ENCODE measurements at regions of chr2 and their contacts with region 1.

Region 1: GRCh38 chr2:27409321-27410073 is at the start of gene PPM1G:
- DNase-seq: peak; percentile 97
- H3K4me3 ChIP-seq: peak within 1 kb of the TSS; percentile 57 to 98 (median 75)
- H3K27ac ChIP-seq: peak within 1 kb of the TSS; percentile 73 to 93 (median 82)
- H3K4me1 ChIP-seq: peaks cover 0 to 36% (median 22%) of the 10 kb centered on the region in 4 donors
- H3K27me3 ChIP-seq: no peaks in the 10 kb centered on the region
- CTCF ChIP-seq: no peak
- EP300 ChIP-seq: no peak
- POLR2A ChIP-seq: peak in 1 of 2 donors; percentile 37
- total RNA-seq, gene PPM1G: 40.8 to 48.3 (median 44.5) TPM

Region 2: GRCh38 chr2:27380626-27381545 is 28.6 kb before region 1 on chr2 and contains the start of gene ZNF513:
- intact Hi-C with region 1: loop called (anchors 2 kb)
- DNase-seq: peak; percentile 99
- H3K4me3 ChIP-seq: peak within 1 kb of the TSS; percentile 51 to 87 (median 72)
- H3K27ac ChIP-seq: peak within 1 kb of the TSS; percentile 84 to 90 (median 88)
- H3K4me1 ChIP-seq: peaks cover 0 to 23% (median 21%) of the 10 kb centered on the region in 4 donors
- H3K27me3 ChIP-seq: no peaks in the 10 kb centered on the region
- CTCF ChIP-seq: no peak
- EP300 ChIP-seq: peak in 1 of 4 donors; percentile 29
- POLR2A ChIP-seq: peak; percentile 20 to 22
- total RNA-seq, gene ZNF513: 5.0 to 8.7 (median 7.2) TPM

Region 3: GRCh38 chr2:27428213-27428977 is 18.9 kb after region 1 on chr2 and contains the start of gene NRBP1:
- intact Hi-C with region 1: loop called (anchors 1 kb)
- DNase-seq: peak; percentile 95
- H3K4me3 ChIP-seq: peak within 1 kb of the TSS; percentile 89 to 99 (median 96)
- H3K27ac ChIP-seq: peak within 1 kb of the TSS; percentile 97 to 100 (median 98)
- H3K4me1 ChIP-seq: peaks cover 0 to 48% (median 40%) of the 10 kb centered on the region in 4 donors
- H3K27me3 ChIP-seq: no peaks in the 10 kb centered on the region
- CTCF ChIP-seq: no peak
- EP300 ChIP-seq: no peak
- POLR2A ChIP-seq: peak; percentile 92 to 93
- total RNA-seq, gene NRBP1: 78.5 to 93.5 (median 86.4) TPM

Region 4: GRCh38 chr2:27559228-27559627 is 149.7 kb after region 1 on chr2:
- intact Hi-C with region 1: no loop called
- DNase-seq: no peak
- H3K4me3 ChIP-seq: no peak overlapping the region
- H3K27ac ChIP-seq: no peak overlapping the region
- H3K4me1 ChIP-seq: no peaks in the 10 kb centered on the region
- H3K27me3 ChIP-seq: peaks cover 0 to 8% (median 0%) of the 10 kb centered on the region in 3 donors
- CTCF ChIP-seq: no peak
- EP300 ChIP-seq: no peak
- POLR2A ChIP-seq: no peak

Measured in sigmoid colon (tissue), 7 donors.